ENCODE measurements at regions of chr11 and their contacts with region 1.

Region 1: DNA sequence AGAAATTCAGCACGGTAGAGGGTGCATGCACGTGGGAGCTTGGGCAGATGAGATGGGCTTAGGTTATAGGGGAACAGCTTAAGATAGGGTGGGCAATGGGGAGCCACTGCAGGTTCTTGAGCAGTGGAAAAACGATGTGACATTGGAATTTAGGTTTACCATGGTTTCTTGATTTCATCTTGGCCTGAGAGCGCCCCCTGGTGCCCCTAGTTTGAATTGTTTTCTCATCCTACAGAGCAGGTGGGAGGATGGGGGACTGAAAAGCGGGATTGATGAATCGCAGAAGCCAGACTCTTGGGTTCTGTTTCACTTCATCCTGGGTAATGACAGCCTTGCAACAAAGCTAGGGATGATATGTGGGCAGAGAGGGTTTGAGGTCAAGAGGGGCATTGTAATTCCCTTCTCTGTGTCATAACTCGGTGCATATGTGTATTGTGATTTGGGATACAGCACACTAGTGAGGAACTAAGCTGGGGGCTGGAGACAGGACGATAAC is 6.7 kb upstream of the MCAM start:
- DNase-seq: peak; percentile 94
- ATAC-seq: no peak
- H3K4me3 Mint-ChIP-seq: no peak overlapping the region
- H3K27ac Mint-ChIP-seq: no peak overlapping the region
- H3K4me1 Mint-ChIP-seq: peaks cover 18% of the 10 kb centered on the region
- H3K27me3 Mint-ChIP-seq: peaks cover 3% of the 10 kb centered on the region
- CTCF ChIP-seq: peak; percentile 90

Region 2: GRCh38 chr11:119168471-119169281 is 154.9 kb before region 1 on chr11 and contains the start of gene NLRX1:
- CTCF ChIA-PET with region 1: interaction called, 17 read pairs
- POLR2A ChIA-PET with region 1: interaction called, 6 read pairs
- intact Hi-C with region 1: no loop called
- DNase-seq: peak; percentile 91
- ATAC-seq: peak; percentile 95
- H3K4me3 Mint-ChIP-seq: peak within 1 kb of the TSS; percentile 89
- H3K27ac Mint-ChIP-seq: peak within 1 kb of the TSS; percentile 92
- H3K4me1 Mint-ChIP-seq: peaks cover 9% of the 10 kb centered on the region
- H3K27me3 Mint-ChIP-seq: no peaks in the 10 kb centered on the region
- CTCF ChIP-seq: peak; percentile 89
- total RNA-seq, gene NLRX1: 20.1 to 21.3 TPM

Region 3: GRCh38 chr11:119196833-119197483 is 126.6 kb before region 1 on chr11:
- CTCF ChIA-PET with region 1: interaction called, 14 read pairs
- POLR2A ChIA-PET with region 1: no interaction called
- intact Hi-C with region 1: loop called (anchors 10 kb)
- DNase-seq: peak; percentile 83
- ATAC-seq: peak; percentile 96
- H3K4me3 Mint-ChIP-seq: no peak overlapping the region
- H3K27ac Mint-ChIP-seq: no peak overlapping the region
- H3K4me1 Mint-ChIP-seq: peaks cover 2% of the 10 kb centered on the region
- H3K27me3 Mint-ChIP-seq: no peaks in the 10 kb centered on the region
- CTCF ChIP-seq: peak; percentile 80

Region 4: GRCh38 chr11:119218141-119218878 is 105.3 kb before region 1 on chr11:
- CTCF ChIA-PET with region 1: no interaction called
- POLR2A ChIA-PET with region 1: no interaction called
- intact Hi-C with region 1: no loop called
- DNase-seq: peak; percentile 47
- ATAC-seq: peak; percentile 99
- H3K4me3 Mint-ChIP-seq: no peak overlapping the region
- H3K27ac Mint-ChIP-seq: peak overlapping the region; percentile 43
- H3K4me1 Mint-ChIP-seq: peaks cover 42% of the 10 kb centered on the region
- H3K27me3 Mint-ChIP-seq: no peaks in the 10 kb centered on the region
- CTCF ChIP-seq: no peak

Region 5: GRCh38 chr11:119262668-119263351 is 60.8 kb before region 1 on chr11:
- CTCF ChIA-PET with region 1: interaction called, 36 read pairs
- POLR2A ChIA-PET with region 1: no interaction called
- intact Hi-C with region 1: no loop called
- DNase-seq: peak; percentile 15
- ATAC-seq: peak; percentile 83
- H3K4me3 Mint-ChIP-seq: no peak overlapping the region
- H3K27ac Mint-ChIP-seq: no peak overlapping the region
- H3K4me1 Mint-ChIP-seq: peaks cover 52% of the 10 kb centered on the region
- H3K27me3 Mint-ChIP-seq: no peaks in the 10 kb centered on the region
- CTCF ChIP-seq: peak; percentile 28

Region 6: DNA sequence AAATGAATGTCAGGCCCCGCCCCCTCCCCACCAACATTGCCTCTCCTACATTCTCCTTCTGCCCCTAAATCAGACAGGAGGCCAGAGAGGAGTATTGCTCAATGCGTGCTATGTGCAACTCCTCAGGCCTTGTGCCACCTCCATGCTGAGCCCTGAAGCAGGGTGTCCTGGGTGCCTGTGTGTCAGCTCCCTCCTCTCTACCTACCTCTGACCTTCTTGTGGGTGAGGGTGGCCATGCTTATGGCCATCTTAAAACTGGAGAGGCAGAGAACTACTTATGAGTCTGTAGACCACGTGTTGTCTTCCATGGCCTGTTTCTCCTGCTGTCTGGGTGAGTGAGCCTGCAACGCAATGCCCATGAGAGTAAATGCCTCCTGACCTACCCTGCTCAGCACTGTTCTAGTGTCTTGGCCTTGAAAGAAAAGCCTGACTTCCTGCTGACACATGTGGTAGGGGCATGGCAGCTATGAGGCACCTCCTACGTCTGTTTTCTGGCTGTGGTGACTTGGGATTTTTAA is 17.2 kb before region 1 on chr11:
- CTCF ChIA-PET with region 1: interaction called, 77 read pairs
- POLR2A ChIA-PET with region 1: interaction called, 11 read pairs
- intact Hi-C with region 1: no loop called
- DNase-seq: peak; percentile 62
- ATAC-seq: peak; percentile 91
- H3K4me3 Mint-ChIP-seq: peak overlapping the region; percentile 40
- H3K27ac Mint-ChIP-seq: peak overlapping the region; percentile 91
- H3K4me1 Mint-ChIP-seq: peaks cover 25% of the 10 kb centered on the region
- H3K27me3 Mint-ChIP-seq: no peaks in the 10 kb centered on the region
- CTCF ChIP-seq: no peak

Region 7: DNA sequence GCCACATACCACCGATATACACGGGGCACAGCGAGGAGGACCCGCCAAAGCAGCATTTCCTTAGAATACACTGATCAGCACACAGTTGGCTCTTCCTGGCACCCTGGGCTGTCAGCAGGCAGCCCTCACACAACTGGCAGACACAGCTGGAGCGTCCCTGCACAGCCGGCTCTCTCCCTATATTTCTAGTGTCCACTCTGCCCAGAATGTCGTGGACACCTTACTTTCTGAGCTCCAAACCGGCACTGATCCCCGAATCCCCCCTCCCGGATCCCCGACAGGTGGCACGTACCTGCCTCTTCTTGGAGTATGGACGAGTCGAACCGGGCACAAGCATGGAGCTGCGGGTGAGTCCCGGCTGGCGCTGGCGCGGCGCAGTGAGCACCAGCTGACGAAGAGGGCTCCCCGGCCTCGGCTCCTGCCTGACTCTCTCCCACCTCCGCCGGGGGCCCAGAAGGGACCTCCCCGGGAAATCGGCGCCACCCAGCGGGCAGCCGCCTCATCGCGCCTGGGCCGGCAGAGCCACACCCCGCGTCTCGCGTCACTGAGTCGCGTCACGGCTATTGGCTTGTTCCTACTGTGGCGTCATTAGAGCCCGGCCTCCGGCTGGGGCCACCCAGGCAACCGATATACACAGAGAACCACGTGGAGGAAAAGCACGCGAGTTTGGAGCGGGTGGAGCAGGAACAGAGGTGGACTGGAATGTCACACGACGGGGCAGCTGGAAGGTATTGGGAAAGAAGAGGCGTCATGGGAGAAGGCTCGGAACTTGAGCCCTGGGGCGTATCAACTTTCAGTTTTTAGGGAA is 57.8 kb after region 1 on chr11 and contains the start of gene USP2:
- CTCF ChIA-PET with region 1: interaction called, 28 read pairs
- POLR2A ChIA-PET with region 1: interaction called, 3 read pairs
- intact Hi-C with region 1: no loop called
- DNase-seq: peak; percentile 97
- ATAC-seq: peak; percentile 99
- H3K4me3 Mint-ChIP-seq: no peak within 1 kb of the TSS
- H3K27ac Mint-ChIP-seq: no peak within 1 kb of the TSS
- H3K4me1 Mint-ChIP-seq: peaks cover 7% of the 10 kb centered on the region
- H3K27me3 Mint-ChIP-seq: no peaks in the 10 kb centered on the region
- CTCF ChIP-seq: peak; percentile 88
- total RNA-seq, gene USP2: 0.61 to 0.96 TPM

Measured in activated CD8-positive, alpha-beta T cell treated with anti-CD3 and anti-CD28 coated beads for 36 hours (primary cell).